ENCODE measurements at regions of chr10 and their contacts with region 1.

Region 1: GRCh38 chr10:44974628-44975431 is 3.8 kb downstream of the DEPP1 start:
- DNase-seq: peak; percentile 79 to 86 (median 80)
- ATAC-seq: peak; percentile 87
- H3K4me3 ChIP-seq: no peak overlapping the region
- H3K4me1 ChIP-seq: peaks cover 24% of the 10 kb centered on the region
- CTCF ChIP-seq: peak; percentile 93

Region 2: DNA sequence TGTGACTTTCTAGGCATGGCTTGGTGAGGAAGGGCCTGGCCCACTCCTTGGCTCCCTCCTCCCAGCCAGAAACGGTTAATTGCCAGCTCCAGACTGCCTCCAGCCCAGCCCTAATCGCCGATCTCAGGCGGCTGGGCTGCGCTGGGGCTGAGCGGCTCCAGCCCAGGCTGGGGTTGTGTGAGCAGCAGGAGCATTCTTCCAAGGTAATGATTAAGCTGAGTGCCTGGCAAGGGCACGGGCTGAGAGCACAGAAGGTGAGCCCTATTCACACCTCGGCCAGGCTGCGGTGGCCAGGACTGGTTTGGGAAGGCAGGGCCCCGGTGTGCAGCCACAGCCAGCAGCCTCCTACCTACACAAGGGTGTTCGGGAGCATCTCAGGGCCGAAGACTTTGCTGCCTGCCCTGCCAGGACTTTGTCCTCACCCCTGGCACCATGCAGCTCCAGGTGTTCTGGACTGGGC is 63.7 kb before region 1 on chr10 and contains the start of gene TMEM72:
- intact Hi-C with region 1: loop called in 1 of 2 experiments (anchors 2 kb)
- DNase-seq: peak; percentile 75 to 84 (median 82)
- ATAC-seq: peak; percentile 92
- H3K4me3 ChIP-seq: no peak within 1 kb of the TSS
- H3K4me1 ChIP-seq: peaks cover 38% of the 10 kb centered on the region
- CTCF ChIP-seq: no peak
- total RNA-seq, gene TMEM72: 14.9 to 40.6 (median 17.4) TPM

Region 3: GRCh38 chr10:44922021-44922420 is 52.8 kb before region 1 on chr10:
- intact Hi-C with region 1: no loop called
- DNase-seq: no peak
- ATAC-seq: no peak
- H3K4me3 ChIP-seq: no peak overlapping the region
- H3K4me1 ChIP-seq: no peaks in the 10 kb centered on the region
- CTCF ChIP-seq: no peak

Region 4: GRCh38 chr10:44932517-44933450 is 42.0 kb before region 1 on chr10:
- intact Hi-C with region 1: loop called in 1 of 2 experiments (anchors 2 kb)
- DNase-seq: peak; percentile 87 to 99 (median 95)
- ATAC-seq: peak; percentile 94
- H3K4me3 ChIP-seq: no peak overlapping the region
- H3K4me1 ChIP-seq: peaks cover 2% of the 10 kb centered on the region
- CTCF ChIP-seq: peak; percentile 82

Region 5: DNA sequence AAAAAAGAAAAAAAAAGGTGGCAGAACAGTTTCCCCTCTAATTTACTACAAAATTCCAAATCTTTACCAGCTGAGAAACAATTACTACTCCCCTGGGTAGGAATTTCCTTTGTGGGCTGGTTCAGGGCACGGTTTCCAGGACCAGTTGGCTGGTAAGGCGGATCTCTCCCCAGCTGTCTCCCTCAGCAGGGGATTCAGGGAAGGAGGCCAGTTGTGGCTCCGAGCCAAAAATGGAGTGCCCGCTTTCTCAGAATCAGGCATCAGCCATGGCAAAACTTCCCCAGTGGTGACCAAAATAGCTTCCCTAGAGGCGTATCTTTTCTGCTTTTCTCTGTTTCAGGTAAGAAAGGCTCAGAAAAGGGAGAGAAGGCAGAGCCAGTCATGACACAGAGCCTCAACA is 117.1 kb after region 1 on chr10:
- intact Hi-C with region 1: no loop called
- DNase-seq: no peak
- ATAC-seq: no peak
- H3K4me3 ChIP-seq: no peak overlapping the region
- H3K4me1 ChIP-seq: no peaks in the 10 kb centered on the region
- CTCF ChIP-seq: no peak

Region 6: GRCh38 chr10:45368181-45368580 is 393.4 kb after region 1 on chr10:
- intact Hi-C with region 1: no loop called
- DNase-seq: no peak
- ATAC-seq: no peak
- H3K4me3 ChIP-seq: no peak overlapping the region
- H3K4me1 ChIP-seq: peaks cover 2% of the 10 kb centered on the region
- CTCF ChIP-seq: no peak